Dendritic cell treated with granulocyte-macrophage colony-stimulating factor and Interleukin-4, amounts not matched to agents 40 ng/mL and 50 ng/mL, for 4 days (primary cell): ENCODE measurements at regions of chr2 and their contacts with region 1.

Region 1: GRCh38 chr2:28452534-28453081 is 43.3 kb upstream of the PLB1 start:
- H3K4me3 Mint-ChIP-seq: no peak overlapping the region
- H3K27ac Mint-ChIP-seq: no peak overlapping the region
- H3K4me1 Mint-ChIP-seq: peaks cover 56% of the 10 kb centered on the region
- H3K27me3 Mint-ChIP-seq: no peaks in the 10 kb centered on the region

Region 2: DNA sequence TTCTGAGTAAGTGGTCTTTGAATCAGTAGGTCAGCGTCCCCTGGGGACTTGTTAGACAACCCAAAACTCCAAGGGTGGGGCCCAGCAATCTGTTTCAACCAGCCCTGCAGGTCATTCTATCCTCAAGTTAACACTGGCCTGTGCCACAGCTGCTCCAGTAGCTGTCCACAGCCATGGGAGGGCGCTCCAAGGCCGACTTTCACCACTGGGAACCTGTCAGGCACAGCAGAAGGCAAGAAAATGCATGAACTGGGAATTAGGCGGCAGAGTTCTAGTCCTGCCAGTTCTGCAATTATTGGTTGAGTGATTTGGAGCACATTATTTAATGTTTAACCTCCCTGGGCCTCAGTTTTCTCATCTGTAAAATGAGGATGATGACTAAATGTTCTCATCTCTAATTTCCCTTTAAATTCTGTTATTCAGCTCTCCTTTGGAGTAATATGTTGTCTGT is 698.4 kb before region 1 on chr2:
- intact Hi-C with region 1: loop called (anchors 5 kb)
- H3K4me3 Mint-ChIP-seq: no peak overlapping the region
- H3K27ac Mint-ChIP-seq: peak overlapping the region; percentile 83
- H3K4me1 Mint-ChIP-seq: peaks cover 39% of the 10 kb centered on the region
- H3K27me3 Mint-ChIP-seq: no peaks in the 10 kb centered on the region

Region 3: DNA sequence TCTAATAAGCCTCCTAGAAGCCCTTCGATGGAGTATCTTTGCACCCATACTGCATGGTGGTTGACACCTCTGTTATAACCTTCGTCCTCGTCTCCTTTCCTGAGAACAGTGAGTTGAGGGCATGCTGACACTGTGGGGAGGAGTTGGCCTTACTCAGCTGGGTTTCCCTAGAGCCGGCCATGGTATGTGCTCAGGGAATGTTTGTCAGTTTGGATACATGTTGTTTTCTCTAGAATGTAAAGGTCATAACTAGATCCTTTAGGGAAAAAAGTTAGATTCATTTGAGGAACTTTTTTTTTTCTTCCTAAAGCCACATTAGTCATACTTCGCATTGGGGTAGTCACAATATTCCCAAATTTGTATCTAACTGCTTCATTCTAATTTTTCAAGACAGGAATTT is 165.9 kb before region 1 on chr2:
- intact Hi-C with region 1: no loop called
- H3K4me3 Mint-ChIP-seq: no peak overlapping the region
- H3K27ac Mint-ChIP-seq: no peak overlapping the region
- H3K4me1 Mint-ChIP-seq: peaks cover 8% of the 10 kb centered on the region
- H3K27me3 Mint-ChIP-seq: no peaks in the 10 kb centered on the region

Region 4: DNA sequence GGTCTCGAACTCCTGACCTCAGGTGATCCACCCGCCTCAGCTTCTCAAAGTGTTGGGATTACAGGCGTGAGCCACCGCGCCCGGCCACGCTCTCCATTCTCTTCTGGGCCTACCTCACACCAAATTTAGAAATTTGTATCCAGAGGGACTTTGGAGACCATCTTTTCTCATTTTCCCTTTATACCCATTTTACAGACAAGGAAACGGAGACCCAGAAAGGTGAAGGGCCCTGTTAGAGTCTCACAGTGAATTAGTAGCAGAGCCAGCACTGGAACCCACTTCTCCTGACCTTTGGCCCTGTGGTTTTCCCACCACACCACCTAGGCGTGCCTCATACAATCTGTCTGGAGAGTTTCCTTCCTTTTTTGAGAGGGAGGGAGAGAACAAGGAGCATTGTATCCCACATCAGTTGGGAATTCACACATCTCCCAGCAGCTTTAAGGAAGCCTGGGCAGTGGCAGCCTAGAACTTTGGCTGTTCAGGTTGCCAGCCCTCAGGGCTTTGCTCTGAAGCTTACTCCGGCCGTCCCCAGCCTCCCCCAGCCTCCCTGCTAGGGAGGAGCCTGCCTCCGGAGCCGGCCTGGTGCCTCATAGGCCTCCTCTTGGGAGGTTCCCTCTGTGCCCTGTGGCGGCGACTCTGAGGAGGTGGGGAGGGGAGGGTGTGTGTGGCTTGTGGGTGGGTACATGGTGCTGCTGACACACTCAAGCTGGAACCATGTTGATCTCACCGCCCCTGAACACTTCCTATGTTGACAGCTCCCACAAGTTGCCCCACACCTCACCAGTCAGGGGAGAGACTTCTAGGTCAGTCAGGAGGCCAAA is 46.1 kb before region 1 on chr2:
- intact Hi-C with region 1: loop called (anchors 5 kb)
- H3K4me3 Mint-ChIP-seq: peak overlapping the region; percentile 60
- H3K27ac Mint-ChIP-seq: peak overlapping the region; percentile 87
- H3K4me1 Mint-ChIP-seq: peaks cover 83% of the 10 kb centered on the region
- H3K27me3 Mint-ChIP-seq: no peaks in the 10 kb centered on the region